CD8-positive, alpha-beta T cell (primary cell): ENCODE measurements at regions of chr16 and their contacts with region 1.

Region 1: DNA sequence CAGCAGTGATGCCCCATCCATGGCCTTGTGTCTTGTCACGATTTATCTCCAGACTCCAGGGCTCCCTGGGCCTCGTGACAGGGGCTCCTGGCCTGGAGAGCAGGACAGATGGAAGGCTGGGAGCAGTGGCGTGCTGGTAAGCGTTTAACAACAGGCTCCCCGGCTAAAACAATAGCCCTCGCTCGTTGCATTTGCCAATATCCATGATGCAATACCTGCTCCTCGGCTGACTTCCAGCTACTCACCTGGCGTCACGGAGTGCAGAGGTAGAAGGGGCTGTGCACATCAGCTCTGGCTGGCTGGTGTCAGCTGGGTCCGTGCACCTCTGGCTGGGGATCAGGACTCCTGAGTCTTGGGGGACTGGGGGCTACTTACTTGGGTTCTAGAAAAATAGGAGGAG is 1.5 kb upstream of the BICDL2 start:
- DNase-seq: peak in 1 of 9 experiments; percentile 18
- ATAC-seq: no peak
- H3K4me3 ChIP-seq: no peak overlapping the region
- H3K4me3 Mint-ChIP-seq: no peak overlapping the region
- H3K27ac ChIP-seq: no peak overlapping the region
- H3K27ac Mint-ChIP-seq: no peak overlapping the region
- H3K4me1 ChIP-seq: peaks cover 9% of the 10 kb centered on the region
- H3K4me1 Mint-ChIP-seq: peaks cover 4% of the 10 kb centered on the region
- H3K27me3 ChIP-seq: peaks cover 48 to 59% of the 10 kb centered on the region in 2 experiments
- H3K27me3 Mint-ChIP-seq: peaks cover 56% of the 10 kb centered on the region
- CTCF ChIP-seq: no peak

Region 2: DNA sequence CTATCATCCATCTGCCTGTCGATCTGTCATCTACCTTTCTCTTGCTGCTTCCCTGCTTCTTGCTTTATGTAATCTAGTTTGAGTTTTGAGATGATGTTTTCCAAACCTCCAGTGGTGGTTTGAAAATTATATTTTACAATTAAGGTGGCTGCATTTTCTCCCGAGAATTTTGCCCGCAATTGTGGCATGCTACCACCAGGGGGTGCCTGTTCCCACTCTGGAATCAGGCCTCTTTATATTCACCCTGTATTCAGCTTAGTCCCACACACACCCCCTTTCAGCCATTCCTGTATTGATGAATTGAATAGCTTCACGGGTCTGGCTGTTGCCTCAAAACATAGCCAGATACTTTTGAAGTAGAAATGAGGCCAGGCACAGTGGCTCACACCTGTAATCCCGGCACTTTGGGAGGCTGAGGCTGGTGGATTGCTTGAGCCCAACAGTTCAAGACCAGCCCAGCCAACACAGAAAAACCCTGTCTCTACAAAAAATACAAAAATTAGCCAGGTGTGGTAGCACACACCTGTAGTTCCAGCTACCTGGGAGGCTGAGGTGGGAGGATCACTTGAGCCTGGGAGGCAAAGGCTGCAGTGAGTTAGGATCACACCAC is 183.5 kb before region 1 on chr16:
- CTCF ChIA-PET with region 1: no interaction called
- POLR2A ChIA-PET with region 1: no interaction called
- intact Hi-C with region 1: no loop called
- DNase-seq: no peak
- ATAC-seq: no peak
- H3K4me3 ChIP-seq: no peak overlapping the region
- H3K4me3 Mint-ChIP-seq: no peak overlapping the region
- H3K27ac ChIP-seq: no peak overlapping the region
- H3K27ac Mint-ChIP-seq: no peak overlapping the region
- H3K4me1 ChIP-seq: peaks cover 18% of the 10 kb centered on the region
- H3K4me1 Mint-ChIP-seq: peaks cover 4% of the 10 kb centered on the region
- H3K27me3 ChIP-seq: peaks cover 3% of the 10 kb centered on the region in 2 experiments
- H3K27me3 Mint-ChIP-seq: peaks cover 5% of the 10 kb centered on the region
- CTCF ChIP-seq: no peak

Region 3: GRCh38 chr16:3051494-3051893 is 13.2 kb after region 1 on chr16:
- CTCF ChIA-PET with region 1: interaction called, 17 read pairs
- POLR2A ChIA-PET with region 1: interaction called, 12 read pairs
- intact Hi-C with region 1: no loop called
- DNase-seq: peak in 1 of 9 experiments; percentile 1
- ATAC-seq: no peak
- H3K4me3 ChIP-seq: no peak overlapping the region
- H3K4me3 Mint-ChIP-seq: no peak overlapping the region
- H3K27ac ChIP-seq: no peak overlapping the region
- H3K27ac Mint-ChIP-seq: no peak overlapping the region
- H3K4me1 ChIP-seq: peaks cover 13% of the 10 kb centered on the region
- H3K4me1 Mint-ChIP-seq: peaks cover 36% of the 10 kb centered on the region
- H3K27me3 ChIP-seq: peaks cover 0 to 8% of the 10 kb centered on the region in 2 experiments
- H3K27me3 Mint-ChIP-seq: no peaks in the 10 kb centered on the region
- CTCF ChIP-seq: no peak